ENCODE measurements at regions of chr14 and their contacts with region 1.

Region 1: DNA sequence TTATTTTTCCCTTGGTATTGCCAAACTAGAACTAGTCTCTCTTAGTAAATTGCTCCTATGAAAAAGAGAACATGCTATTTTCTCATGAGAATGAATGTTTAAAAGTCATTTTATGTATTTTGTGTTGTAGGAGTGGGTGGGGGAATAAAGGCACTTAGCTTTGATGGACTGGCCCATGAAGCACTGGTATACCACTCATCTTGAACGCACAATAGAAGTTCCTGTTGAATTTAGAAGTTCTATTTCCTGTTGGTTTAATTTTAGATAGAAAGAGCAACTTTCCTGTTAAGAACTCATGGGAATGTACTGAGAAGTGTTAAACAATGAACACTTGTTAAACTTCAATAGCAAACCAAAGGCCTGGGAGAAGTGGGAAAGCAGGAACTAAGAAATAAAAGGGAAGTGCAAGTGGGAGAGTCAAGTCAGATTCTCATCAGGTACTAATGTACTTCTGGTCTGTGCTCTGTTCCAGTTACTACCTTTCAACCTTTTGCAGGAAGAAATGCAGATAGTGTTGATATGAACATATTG is 23.1 kb downstream of the TTC6 start:
- DNase-seq: no peak
- ATAC-seq: peak; percentile 50
- H3K4me3 ChIP-seq: no peak overlapping the region
- H3K4me1 ChIP-seq: no peaks in the 10 kb centered on the region
- CTCF ChIP-seq: no peak

Region 2: GRCh38 chr14:38129705-38130104 is 511.1 kb after region 1 on chr14:
- intact Hi-C with region 1: loop called in 1 of 2 experiments (anchors 5 kb)
- DNase-seq: no peak
- ATAC-seq: no peak
- H3K4me3 ChIP-seq: no peak overlapping the region
- H3K4me1 ChIP-seq: no peaks in the 10 kb centered on the region
- CTCF ChIP-seq: no peak

Measured in mucosa of descending colon (tissue), 3 donors.